ENCODE measurements at regions of chr7 and their contacts with region 1.

Region 1: GRCh38 chr7:141302617-141303016 is 228.8 kb downstream of the TMEM178B start:
- DNase-seq: no peak
- ATAC-seq: peak; percentile 91

Region 2: GRCh38 chr7:141280100-141280499 is 22.5 kb before region 1 on chr7:
- intact Hi-C with region 1: loop called (anchors 2 kb)
- DNase-seq: no peak
- ATAC-seq: no peak

Region 3: GRCh38 chr7:141366091-141366621 is 63.5 kb after region 1 on chr7:
- intact Hi-C with region 1: loop called (anchors 2 kb)
- DNase-seq: no peak
- ATAC-seq: peak; percentile 76

Measured in Right ventricle myocardium inferior (tissue), 1 donor.